Activated CD8-positive, alpha-beta memory T cell treated with anti-CD3 and anti-CD28 coated beads, Interleukin-2, amount 10 ng/mL, durations not matched to agents 7 days and 5 days (primary cell): ENCODE measurements at regions of chr5 and their contacts with region 1.

Region 1: GRCh38 chr5:152532714-152533113 is 127.6 kb upstream of the NMUR2 start:
- DNase-seq: no peak
- ATAC-seq: no peak
- H3K4me3 Mint-ChIP-seq: no peak overlapping the region
- H3K27ac Mint-ChIP-seq: no peak overlapping the region
- H3K4me1 Mint-ChIP-seq: no peaks in the 10 kb centered on the region
- H3K27me3 Mint-ChIP-seq: peaks cover 12% of the 10 kb centered on the region

Region 2: DNA sequence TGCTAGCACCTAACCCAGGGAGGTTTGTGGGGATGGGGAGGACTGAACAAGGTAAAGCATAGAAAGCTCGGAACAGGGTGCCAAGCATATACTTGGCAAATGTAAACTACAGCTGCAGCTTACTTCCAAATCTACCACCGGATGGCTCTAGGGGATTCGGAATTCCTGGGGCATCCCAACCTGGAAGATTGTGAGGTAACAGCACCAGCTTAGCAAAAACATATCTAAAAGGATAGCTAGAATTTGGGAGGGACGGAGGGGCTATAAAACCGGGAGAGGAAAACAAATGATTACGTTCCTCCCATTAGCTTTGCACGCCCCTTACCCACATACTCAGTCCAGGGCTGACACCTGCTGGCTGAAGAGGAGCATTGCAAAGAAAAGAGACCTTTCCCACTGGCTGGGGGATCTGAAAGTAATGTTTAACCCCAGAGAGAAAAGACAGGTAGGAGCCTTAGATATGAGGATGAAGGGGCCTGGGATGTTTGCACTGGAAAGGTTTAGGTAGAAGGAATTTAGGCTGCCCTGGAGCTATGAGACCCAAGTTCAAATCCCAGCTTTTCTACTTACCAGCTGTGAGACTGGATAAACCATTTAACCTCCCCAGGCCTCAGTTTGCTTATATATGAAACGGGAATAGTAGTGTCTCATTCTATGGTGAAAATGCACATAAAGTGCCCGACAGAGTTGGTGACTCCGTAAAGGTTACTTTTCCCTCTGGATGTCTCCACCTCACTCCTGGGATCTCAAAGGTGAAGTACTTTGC is 1432.3 kb after region 1 on chr5:
- CTCF ChIA-PET with region 1: interaction called, 16 read pairs
- DNase-seq: peak; percentile 56
- ATAC-seq: peak; percentile 61
- H3K4me3 Mint-ChIP-seq: no peak overlapping the region
- H3K27ac Mint-ChIP-seq: no peak overlapping the region
- H3K4me1 Mint-ChIP-seq: peaks cover 5% of the 10 kb centered on the region
- H3K27me3 Mint-ChIP-seq: peaks cover 13% of the 10 kb centered on the region